ENCODE measurements at regions of chr7 and their contacts with region 1.

Region 1: DNA sequence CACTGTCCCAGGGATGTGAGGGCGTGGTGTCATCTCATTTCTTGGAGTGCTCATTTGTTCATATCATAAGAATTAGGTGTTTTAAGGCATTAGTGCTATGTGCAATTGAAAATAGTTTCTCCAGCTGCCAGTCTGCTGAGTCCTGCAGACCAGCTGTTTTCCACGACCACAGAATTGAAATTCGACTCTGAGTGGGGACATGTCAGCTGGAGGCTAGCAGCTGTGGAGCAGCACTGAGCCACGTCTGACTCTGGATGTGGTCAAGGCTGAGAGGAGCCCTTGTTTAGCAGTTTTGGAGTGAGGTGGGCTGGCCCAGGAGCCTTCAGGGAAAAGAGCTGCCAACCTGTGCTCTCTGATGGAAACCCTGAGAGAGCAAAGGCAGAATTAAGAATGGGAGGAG is 156.3 kb upstream of the GRB10 start:
- DNase-seq: peak; percentile 62
- H3K4me3 ChIP-seq: no peak overlapping the region
- CTCF ChIP-seq: no peak

Region 2: GRCh38 chr7:50838675-50839377 is 100.2 kb before region 1 on chr7:
- in situ Hi-C with region 1: no loop called
- DNase-seq: peak; percentile 64
- H3K4me3 ChIP-seq: no peak overlapping the region
- CTCF ChIP-seq: no peak

Region 3: DNA sequence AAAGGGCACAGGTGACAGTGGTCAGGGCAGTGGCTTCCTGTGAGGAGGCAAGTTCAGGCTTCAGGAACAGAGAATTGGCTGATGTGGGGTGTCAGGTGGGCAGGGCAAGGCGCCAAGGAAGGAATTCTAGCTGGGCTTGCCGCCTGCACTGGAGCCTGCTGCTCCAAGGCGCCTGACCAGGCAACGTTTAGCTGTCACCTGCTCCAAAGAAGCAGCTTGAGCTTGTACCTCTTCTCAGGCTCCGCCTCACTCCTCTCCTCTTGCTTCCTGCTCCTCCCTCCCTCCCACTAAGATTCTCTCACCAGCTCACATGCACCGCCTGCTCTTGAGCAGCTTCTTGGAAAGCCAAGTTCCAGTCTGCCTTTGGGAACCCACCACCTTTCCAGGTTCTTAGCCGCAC is 31.1 kb after region 1 on chr7:
- in situ Hi-C with region 1: loop called (anchors 5 kb)
- DNase-seq: no peak
- H3K4me3 ChIP-seq: no peak overlapping the region
- CTCF ChIP-seq: no peak